ENCODE measurements at regions of chr12 and their contacts with region 1.

Region 1: DNA sequence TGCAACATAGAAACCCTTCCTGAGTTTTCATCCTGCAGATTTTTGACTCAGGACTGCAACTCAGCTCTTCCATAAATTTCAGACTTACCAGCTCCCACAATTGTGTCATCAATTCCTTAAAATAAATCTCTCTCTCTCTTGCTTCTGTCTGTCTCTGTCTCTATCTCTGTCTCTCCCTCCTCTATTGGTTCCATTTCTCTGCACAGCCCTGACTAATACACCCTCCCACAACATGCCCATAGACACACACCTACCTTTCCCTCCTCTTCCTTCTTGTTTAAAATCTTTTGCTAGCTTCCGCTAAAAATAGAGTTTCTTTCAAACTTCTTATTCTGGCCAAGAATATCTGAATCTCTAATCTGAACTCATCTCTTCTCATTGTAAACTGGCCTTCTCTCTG is 22.9 kb upstream of the PTHLH start:
- DNase-seq: no peak
- ATAC-seq: no peak
- H3K4me3 ChIP-seq: no peak overlapping the region
- H3K27ac ChIP-seq: no peak overlapping the region
- H3K4me1 ChIP-seq: peaks cover 21% of the 10 kb centered on the region; the same call in 2 of the 3 replicates
- CTCF ChIP-seq: no peak
- EP300 ChIP-seq: no peak
- POLR2A ChIP-seq: no peak
- RAD21 ChIP-seq: no peak

Region 2: DNA sequence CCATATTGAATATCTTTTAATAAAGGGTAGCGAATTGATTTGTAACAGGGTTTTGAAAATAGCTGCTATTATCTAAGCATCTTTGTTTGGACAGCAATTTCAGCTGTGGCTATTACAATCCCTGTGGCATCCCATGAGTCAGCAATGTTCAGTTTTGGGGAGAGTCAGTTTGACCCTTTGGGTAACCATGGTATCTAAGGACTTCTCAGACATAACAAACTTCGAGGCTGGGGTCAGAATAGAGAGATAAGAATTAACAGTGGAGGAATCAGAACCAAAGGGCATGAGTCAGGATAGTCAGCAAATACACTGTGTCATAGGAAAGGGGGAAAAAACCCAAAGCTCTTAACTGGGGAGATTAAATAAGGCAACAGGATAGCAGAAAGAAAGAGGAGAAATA is 11.1 kb before region 1 on chr12:
- CTCF ChIA-PET with region 1: interaction called, 11 read pairs
- POLR2A ChIA-PET with region 1: no interaction called
- DNase-seq: peak; percentile 60 to 88
- ATAC-seq: peak; percentile 95 to 98
- H3K4me3 ChIP-seq: no peak overlapping the region
- H3K27ac ChIP-seq: peak overlapping the region; percentile 74 to 84
- H3K4me1 ChIP-seq: peaks cover 38% of the 10 kb centered on the region
- CTCF ChIP-seq: no peak
- EP300 ChIP-seq: peak; percentile 36 to 53; a peak in 2 of 5 replicates
- POLR2A ChIP-seq: no peak
- RAD21 ChIP-seq: peak in 1 of 2 experiments; percentile 30; a peak in 2 of 5 replicates

Measured in A549 (cell line).